Activated CD8-positive, alpha-beta T cell treated with anti-CD3 and anti-CD28 coated beads, Interleukin-2, amount 10 ng/mL, durations not matched to agents 7 days and 5 days (primary cell): ENCODE measurements at regions of chr7 and their contacts with region 1.

Region 1: DNA sequence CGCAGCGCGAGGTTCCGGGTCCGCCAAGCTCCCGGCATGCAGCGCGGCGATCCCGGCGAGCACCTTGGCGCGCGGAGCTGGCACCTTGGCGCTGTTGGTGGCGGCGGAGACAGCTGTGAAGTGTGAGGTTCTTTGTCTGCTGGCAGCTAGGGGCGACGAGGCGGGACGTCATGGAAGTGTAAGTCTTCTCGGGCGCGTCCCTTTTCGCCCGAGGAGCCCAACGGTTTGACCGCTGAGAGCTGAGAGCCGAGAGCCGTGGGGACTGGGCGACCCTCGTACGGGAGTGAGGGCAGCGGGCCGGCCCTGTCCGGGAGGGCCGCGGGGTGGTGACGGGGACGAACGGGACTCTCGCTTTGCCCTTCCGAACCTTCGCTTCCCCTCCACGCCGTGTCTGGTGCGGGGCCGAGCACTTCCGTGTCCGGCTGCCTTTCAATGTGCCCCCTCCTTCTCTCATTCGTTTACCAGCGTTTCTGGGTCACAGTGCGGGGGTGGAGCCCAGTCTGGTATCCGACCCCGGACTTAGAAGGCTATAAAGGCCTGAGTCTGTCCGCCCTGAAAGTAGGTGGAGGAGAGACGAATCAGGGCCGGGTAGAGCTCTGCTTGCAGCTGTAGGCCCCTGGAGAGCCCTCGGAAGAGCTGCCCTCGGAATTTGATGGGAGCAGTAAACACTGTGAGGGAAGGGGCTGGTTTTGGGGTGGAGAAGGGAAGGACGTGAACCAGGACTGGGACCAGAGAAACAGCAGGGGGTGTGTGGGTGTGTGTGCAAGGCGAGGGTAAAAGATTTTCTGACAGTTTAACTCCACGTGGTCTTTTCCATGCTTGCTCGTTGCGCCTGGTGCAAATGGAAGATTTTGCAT is at the start of gene CRCP:
- DNase-seq: peak; percentile 86
- ATAC-seq: peak; percentile 91
- H3K4me3 Mint-ChIP-seq: peak within 1 kb of the TSS; percentile 95
- H3K27ac Mint-ChIP-seq: peak within 1 kb of the TSS; percentile 98
- H3K4me1 Mint-ChIP-seq: peaks cover 41% of the 10 kb centered on the region
- H3K27me3 Mint-ChIP-seq: no peaks in the 10 kb centered on the region
- total RNA-seq, gene CRCP: 29.0 to 31.3 TPM

Region 2: GRCh38 chr7:66125052-66125708 is 10.2 kb after region 1 on chr7:
- CTCF ChIA-PET with region 1: interaction called, 9 read pairs
- POLR2A ChIA-PET with region 1: interaction called, 10 read pairs
- DNase-seq: no peak
- ATAC-seq: peak; percentile 38
- H3K4me3 Mint-ChIP-seq: no peak overlapping the region
- H3K27ac Mint-ChIP-seq: peak overlapping the region; percentile 11
- H3K4me1 Mint-ChIP-seq: peaks cover 44% of the 10 kb centered on the region
- H3K27me3 Mint-ChIP-seq: no peaks in the 10 kb centered on the region

Region 3: GRCh38 chr7:66157060-66157459 is 42.0 kb after region 1 on chr7:
- CTCF ChIA-PET with region 1: no interaction called
- POLR2A ChIA-PET with region 1: no interaction called
- DNase-seq: no peak
- ATAC-seq: no peak
- H3K4me3 Mint-ChIP-seq: no peak overlapping the region
- H3K27ac Mint-ChIP-seq: no peak overlapping the region
- H3K4me1 Mint-ChIP-seq: no peaks in the 10 kb centered on the region
- H3K27me3 Mint-ChIP-seq: no peaks in the 10 kb centered on the region